PC-3 (cell line): ENCODE measurements at regions of chr2 and their contacts with region 1.

Region 1: GRCh38 chr2:68185541-68186164 is 28.0 kb downstream of the PNO1 start:
- DNase-seq: peak; percentile 57
- ATAC-seq: no peak
- H3K4me3 ChIP-seq: no peak overlapping the region
- H3K27ac ChIP-seq: no peak overlapping the region
- H3K4me1 ChIP-seq: peaks cover 4% of the 10 kb centered on the region
- H3K27me3 ChIP-seq: no peaks in the 10 kb centered on the region
- CTCF ChIP-seq: peak; percentile 88

Region 2: DNA sequence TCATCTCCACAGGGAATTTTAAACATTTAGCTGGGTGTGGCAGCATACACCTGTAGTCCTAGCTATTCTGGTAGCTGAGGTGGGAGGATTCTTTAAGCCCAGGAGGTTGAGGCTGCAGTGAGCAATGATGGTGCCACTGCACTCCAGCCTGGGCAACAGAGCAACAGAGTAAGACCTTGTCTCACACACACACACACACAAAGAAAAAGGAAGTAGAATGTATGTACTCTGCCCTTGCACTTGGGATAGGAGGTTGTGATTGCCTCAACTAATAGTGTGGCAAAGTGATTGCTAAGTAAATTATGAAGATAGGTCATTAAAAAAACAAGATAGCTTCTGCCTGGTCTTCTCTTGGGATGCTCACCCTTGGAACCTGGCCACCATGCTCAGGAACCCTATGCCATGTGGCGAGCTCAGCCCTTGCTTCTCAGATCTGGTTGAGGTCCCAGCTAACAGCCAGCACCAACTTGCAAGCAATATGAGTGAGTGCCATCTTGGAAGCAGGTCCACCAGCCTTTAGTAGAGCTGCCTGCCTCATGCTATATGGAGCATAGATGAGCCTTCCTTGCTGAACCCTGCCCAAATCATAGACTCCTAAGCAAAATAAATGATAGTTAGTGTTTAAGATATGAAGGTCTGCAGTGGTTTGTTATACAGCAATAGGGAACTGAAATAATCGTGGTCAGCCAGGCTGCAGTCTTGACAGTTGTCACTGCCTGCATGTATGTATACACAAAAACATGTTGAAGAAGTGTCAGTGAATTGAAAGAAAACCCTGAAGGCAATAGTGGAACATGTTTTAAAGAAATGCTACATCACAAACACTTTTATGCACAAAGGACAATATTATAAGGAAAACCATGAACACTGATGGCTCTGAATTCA is 58.1 kb before region 1 on chr2:
- CTCF ChIA-PET with region 1: no interaction called
- POLR2A ChIA-PET with region 1: interaction called, 10 read pairs
- intact Hi-C with region 1: no loop called
- DNase-seq: no peak
- ATAC-seq: no peak
- H3K4me3 ChIP-seq: no peak overlapping the region
- H3K27ac ChIP-seq: no peak overlapping the region
- H3K4me1 ChIP-seq: peaks cover 2% of the 10 kb centered on the region; the same call in 1 of the 2 replicates
- H3K27me3 ChIP-seq: no peaks in the 10 kb centered on the region
- CTCF ChIP-seq: no peak

Region 3: GRCh38 chr2:68319398-68320117 is 133.9 kb after region 1 on chr2 and contains the start of gene CNRIP1:
- CTCF ChIA-PET with region 1: no interaction called
- POLR2A ChIA-PET with region 1: no interaction called
- intact Hi-C with region 1: no loop called
- DNase-seq: peak; percentile 16
- ATAC-seq: peak; percentile 71
- H3K4me3 ChIP-seq: peak within 1 kb of the TSS; percentile 86
- H3K27ac ChIP-seq: peak within 1 kb of the TSS; percentile 62
- H3K4me1 ChIP-seq: peaks cover 16% of the 10 kb centered on the region
- H3K27me3 ChIP-seq: no peaks in the 10 kb centered on the region
- CTCF ChIP-seq: no peak
- total RNA-seq, gene CNRIP1: 11.6 and 11.7 TPM in 2 replicates

Region 4: DNA sequence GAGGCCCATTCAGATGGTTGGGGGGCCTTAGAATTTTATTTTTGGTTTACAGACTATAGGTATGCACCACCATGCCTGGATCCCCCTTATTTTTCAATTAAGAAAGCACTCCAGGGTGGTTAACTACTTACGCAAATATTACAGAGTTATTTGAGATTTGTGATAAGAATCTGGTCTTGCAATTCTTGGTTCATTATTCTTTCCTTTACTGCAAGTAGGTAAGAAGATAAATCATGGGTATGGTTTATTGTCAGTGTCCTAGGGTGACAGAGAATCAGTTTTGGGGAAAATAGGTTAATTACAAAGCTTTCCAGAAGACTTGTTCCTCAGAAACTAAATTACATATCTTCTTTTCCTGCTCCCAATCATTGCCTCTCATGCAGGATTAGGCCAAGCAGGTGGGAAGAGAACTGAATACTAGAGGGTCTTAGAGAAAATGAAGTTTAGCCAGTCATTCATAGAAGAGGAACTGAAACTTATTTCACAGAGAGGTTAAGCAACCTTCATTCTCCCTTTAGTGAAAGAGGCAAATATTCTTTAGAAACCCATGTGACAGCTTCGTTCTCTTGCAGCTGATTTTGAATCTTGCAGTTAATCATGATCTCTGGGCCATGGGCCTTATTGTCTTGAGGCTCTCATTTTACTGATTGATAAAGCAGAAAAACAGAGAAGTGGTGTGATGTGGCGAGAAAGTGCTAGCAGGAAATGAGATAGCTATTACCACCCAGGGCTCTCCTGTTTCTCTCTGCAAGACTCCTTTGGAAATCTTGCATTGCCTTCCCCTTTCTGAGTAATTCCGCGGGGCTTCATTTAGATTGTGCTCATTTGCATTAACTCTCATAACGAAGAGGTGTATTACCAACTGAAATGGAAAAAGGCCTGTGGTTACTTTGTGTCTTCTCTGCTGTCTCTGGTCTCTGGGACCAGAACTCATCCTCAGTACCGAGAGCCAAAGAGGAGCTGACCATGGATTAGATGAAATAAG is 504.2 kb after region 1 on chr2:
- CTCF ChIA-PET with region 1: no interaction called
- POLR2A ChIA-PET with region 1: no interaction called
- intact Hi-C with region 1: no loop called
- DNase-seq: no peak
- ATAC-seq: no peak
- H3K4me3 ChIP-seq: no peak overlapping the region
- H3K27ac ChIP-seq: no peak overlapping the region
- H3K4me1 ChIP-seq: no peaks in the 10 kb centered on the region
- H3K27me3 ChIP-seq: no peaks in the 10 kb centered on the region
- CTCF ChIP-seq: no peak